Ascending aorta (tissue), 2 donors: ENCODE measurements at regions of chr7 and their contacts with region 1.

Region 1: GRCh38 chr7:121994625-121995410 is 121.9 kb downstream of the PTPRZ1 start:
- DNase-seq: peak in 1 of 2 donors; percentile 63
- H3K4me3 ChIP-seq: no peak overlapping the region
- H3K27ac ChIP-seq: no peak overlapping the region
- H3K4me1 ChIP-seq: no peaks in the 10 kb centered on the region
- H3K27me3 ChIP-seq: no peaks in the 10 kb centered on the region
- CTCF ChIP-seq: peak in 2 of 3 experiments; percentile 38 to 52

Region 2: GRCh38 chr7:121752706-121753105 is 242.1 kb before region 1 on chr7:
- intact Hi-C with region 1: loop called (anchors 5 kb)
- DNase-seq: no peak
- H3K4me3 ChIP-seq: no peak overlapping the region
- H3K27ac ChIP-seq: no peak overlapping the region
- H3K4me1 ChIP-seq: no peaks in the 10 kb centered on the region
- H3K27me3 ChIP-seq: no peaks in the 10 kb centered on the region
- CTCF ChIP-seq: peak in 1 of 3 experiments; percentile 21